GM10248 (cell line): ENCODE measurements at regions of chr16 and their contacts with region 1.

Region 1: GRCh38 chr16:75471723-75472633 is 7.5 kb upstream of the TMEM170A start:
- DNase-seq: peak; percentile 74
- CTCF ChIP-seq: peak; percentile 81

Region 2: DNA sequence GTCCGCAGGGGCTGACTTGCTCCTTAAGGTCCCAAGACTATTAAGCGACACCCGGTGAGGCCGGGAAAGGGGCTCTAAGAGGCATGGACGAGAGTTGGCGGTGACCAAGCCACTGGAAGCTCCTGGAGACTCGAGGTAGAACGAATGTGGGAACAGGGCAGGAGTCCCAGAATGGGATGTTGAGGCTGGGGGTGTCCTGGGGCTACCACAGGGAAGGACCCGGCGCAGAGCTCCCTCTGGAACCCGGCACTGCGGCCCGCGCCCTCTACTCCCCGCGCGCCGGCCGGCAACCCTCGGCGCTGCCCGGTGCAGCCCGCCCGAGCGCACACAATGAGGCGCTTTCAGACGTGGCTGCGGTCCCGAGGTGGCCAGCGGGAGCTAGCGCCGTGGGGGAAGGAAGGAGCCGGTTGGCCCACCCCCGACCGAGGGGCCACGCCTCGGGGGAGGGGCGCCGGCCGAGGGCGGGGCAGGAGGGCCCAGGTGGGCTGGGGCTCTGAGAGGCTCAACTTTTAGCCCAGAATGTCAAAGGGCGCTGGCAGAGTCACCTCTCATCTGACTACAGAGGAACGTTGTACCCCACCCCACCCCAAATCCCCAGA is 23.2 kb after region 1 on chr16 and contains the start of gene CHST6:
- CTCF ChIA-PET with region 1: interaction called, 258 read pairs
- POLR2A ChIA-PET with region 1: interaction called, 6 read pairs
- DNase-seq: peak; percentile 86
- CTCF ChIP-seq: no peak